Left cardiac atrium (tissue), 4 donors: ENCODE measurements at regions of chr2 and their contacts with region 1.

Region 1: DNA sequence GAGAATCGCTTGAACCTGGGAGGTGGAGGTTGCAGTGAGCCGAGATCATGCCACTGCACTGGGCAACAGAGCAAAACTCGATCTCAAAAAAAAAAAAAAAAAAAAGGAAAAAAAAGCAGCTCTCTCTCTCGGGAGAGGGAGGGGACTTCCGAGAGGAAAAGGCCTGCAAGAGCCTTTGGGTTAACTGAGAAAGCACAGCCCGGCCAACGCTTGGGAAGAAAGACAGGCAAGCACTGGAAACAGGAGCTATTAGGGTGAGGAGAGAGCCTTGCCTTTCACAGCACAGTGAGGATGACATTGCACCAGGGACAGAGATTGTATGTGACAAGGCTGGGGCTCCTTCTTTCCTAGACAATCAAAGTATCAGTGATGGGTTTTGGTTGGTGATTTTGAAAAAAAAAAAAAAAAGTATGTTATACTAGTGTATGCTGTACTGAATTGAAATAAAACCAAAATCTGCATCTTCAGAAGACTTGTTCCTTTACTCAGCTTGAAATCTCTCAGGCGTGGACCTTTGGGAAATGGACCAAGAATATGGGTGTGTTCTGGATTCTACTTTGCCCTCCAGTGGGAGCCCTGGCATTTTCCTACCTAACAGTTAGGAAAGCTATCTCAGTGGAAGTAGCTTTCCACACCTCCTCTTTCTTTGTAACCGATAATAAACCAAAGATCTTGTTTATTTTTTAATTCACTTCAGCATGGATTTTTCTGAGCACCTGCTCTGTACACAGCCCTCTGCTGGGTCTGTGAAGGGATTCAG is 16.7 kb downstream of the SRSF7 start:
- DNase-seq: peak; percentile 72
- ATAC-seq: peak in 1 of 2 donors; percentile 21

Region 2: DNA sequence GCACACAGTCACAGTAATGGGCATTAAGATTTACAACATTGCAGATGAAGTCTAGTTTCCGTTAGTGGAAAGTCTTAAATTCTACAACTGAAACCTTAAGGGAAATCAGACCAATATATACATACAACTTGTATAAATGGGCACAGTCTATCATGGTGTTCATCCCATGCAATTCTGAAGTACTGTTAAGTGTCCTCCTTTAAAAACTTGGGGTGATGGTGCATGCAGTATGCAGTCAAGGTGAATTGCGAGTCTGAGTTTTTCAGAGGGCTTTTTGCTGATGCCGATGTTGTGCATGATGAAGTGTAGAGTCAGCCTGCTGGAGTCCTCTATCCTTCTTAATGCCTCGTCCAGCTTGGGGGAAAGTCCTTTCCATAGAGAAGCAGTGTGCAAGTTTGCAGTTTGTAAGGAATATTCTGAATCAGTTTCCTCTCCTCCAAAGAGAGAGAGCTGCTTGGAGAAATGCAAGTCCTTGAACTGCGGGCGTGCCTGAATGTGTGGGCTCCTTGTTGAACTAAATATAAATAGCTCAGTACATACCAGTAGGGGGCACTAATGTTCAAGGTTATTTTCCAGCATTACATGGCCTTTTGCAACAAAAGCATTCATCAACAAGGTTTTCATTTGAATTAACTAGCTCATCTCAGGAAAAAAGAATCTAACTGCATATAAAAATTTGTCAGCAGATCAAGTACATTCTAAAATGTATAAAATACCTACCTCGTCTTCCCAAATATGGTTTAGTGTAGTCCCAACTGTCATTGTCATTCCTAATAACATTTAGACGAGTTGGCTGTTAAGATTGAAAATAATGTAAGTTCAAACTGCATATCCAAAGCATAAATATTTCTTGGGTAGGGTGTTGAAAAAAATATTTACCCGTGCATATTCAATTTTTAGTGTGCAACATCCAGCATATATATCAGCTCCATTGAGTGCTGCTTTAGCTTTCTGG is 153.0 kb before region 1 on chr2:
- intact Hi-C with region 1: loop called in 1 of 2 experiments (anchors 5 kb)
- DNase-seq: peak; percentile 34
- ATAC-seq: peak; percentile 72 to 79

Region 3: DNA sequence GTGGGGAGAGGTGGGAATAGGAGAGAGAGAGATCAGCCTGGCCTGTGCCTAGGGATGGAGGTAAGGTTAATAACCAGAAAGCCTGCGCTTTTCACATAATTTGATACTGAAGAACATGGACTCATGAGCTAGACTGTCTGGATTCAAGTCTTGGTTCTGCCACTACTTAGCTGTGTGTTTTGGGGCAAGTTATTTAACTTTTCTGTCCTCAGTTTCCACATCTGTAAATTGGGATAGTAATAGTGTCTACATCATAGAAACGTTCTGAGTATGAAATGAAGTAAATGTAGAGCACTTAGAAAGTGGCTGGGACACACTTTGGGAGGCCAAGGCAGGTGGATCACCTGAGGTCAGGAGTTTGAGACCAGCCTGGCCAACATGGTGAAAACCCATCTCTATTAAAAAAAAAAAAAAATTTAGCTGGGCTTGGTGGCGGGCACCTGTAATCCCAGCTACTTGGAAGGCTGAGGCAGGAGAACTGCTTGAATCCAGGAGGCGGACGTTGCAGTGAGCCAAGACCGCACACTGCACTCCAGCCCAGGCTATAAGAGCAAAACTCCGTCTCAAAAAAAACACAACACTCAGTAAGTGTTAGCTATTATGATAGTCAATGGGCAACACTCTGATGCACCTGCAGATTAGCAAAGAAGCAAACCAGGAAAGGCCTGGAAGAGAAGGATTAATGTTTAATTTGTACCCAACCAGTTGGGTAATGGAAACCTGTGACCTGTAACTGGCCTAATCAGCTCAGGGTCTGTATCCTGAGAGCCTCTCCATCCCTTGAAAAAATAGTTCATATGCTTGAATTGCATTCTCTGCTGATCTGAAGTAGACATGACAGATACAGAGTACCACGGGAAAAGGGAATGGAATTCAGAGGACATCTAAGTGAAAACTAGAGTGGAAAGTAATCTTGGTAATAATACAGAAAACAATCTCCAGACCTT is 61.8 kb before region 1 on chr2:
- intact Hi-C with region 1: no loop called
- DNase-seq: no peak
- ATAC-seq: no peak

Region 4: DNA sequence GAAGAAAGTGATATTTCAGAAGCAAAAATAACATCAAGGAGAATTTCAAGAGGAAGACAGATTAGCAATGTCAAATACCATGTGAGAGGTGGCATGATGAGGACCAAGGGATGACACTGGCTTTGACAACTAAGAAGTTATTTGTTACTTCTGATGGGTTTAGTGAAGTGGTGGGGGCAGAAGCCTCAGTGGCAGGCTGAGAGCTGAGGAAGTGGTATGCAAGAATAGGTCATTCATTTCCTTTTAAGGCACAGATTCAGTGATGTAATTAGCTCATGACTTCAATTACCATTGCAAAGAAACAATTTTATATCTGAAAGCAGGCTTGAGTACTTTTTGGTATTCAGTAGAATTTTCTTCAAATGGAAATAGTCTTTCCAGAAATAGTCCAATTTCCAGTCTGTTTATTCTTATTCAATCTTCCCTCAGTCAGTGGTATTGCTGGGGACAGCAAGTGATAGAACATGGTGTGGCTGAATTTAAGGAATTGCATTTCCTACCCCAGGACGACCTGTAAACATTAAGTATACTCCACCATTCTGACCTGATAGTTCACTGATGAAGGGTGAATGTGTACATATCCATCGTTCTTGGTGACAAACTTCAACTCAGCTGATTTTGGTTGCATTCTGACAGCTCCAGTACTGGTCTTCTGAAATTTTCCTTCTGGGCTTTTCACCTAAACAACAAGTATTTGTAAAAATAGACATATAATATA is 71.7 kb after region 1 on chr2:
- intact Hi-C with region 1: no loop called
- DNase-seq: no peak
- ATAC-seq: no peak

Region 5: GRCh38 chr2:39805936-39806608 is 1071.6 kb after region 1 on chr2:
- intact Hi-C with region 1: no loop called
- DNase-seq: no peak
- ATAC-seq: no peak